Tibial artery (tissue), 4 donors: ENCODE measurements at regions of chr1 and their contacts with region 1.

Region 1: GRCh38 chr1:45359882-45360513 is 19.8 kb upstream of the MUTYH start:
- DNase-seq: peak; percentile 78 to 80
- H3K4me3 ChIP-seq: peak overlapping the region in 1 of 2 donors; percentile 19
- H3K27ac ChIP-seq: peak overlapping the region; percentile 74 to 81
- H3K4me1 ChIP-seq: peaks cover 0 to 16% (median 10%) of the 10 kb centered on the region in 4 donors
- H3K27me3 ChIP-seq: no peaks in the 10 kb centered on the region
- CTCF ChIP-seq: peak; percentile 68 to 72

Region 2: DNA sequence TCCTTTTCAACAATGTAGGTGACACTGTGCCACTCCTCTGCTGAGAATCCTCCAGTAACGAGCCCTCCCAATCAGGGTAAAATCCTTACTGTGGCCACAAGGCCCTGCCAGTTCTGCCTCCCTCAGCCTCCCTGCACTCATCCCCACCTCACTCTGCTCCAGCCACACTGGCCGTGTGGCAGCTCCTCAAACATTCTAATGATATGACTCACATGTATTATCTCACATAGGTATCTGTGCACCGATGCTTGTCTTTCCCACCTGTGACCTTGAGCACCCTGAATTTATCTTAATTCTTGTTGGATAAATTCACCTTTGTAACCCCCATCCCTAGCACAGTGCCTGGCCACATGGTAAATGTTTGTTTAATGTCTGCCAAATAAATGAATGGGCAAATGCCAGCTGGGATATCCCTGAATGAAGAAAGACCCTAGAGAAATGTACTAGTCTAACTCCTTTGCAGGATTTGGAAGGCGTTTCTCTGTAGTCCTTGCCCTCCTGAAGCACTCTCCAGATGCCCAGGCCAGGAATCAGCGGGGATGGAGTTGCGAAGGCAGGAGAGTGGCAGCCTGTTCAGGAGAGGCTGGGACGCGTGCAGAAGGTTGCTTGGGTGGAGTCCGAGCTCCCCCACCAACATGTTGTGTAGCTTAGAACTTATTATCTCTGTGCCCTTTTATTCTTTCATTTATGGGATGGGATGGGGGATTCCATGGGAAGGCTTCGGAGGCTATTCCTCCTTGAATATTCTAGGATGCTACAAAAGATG is 791.7 kb before region 1 on chr1:
- intact Hi-C with region 1: no loop called
- DNase-seq: no peak
- H3K4me3 ChIP-seq: no peak overlapping the region
- H3K27ac ChIP-seq: no peak overlapping the region
- H3K4me1 ChIP-seq: no peaks in the 10 kb centered on the region
- H3K27me3 ChIP-seq: peaks cover 0 to 66% of the 10 kb centered on the region in 2 donors
- CTCF ChIP-seq: no peak

Region 3: DNA sequence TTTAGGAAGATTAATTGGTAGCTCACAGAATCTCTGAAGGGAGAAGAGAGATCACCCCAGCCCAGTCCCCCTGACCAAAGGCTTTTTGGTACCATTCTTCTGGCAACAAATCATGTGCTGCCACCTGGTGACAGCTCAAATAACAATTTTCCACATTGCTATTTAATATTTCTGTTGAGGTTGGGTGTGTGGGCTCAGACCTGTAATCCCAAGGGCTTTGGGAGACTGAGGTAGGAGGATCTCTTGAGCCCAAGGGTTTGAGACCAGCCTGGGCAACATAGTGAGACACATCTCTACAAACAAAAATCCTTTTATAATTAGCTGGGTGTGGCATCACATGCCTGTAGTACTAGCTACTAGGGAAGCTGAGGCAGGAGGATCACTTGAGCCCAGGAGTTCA is 133.2 kb after region 1 on chr1:
- intact Hi-C with region 1: loop called (anchors 2 kb)
- DNase-seq: peak in 1 of 2 donors; percentile 51
- H3K4me3 ChIP-seq: no peak overlapping the region
- H3K27ac ChIP-seq: no peak overlapping the region
- H3K4me1 ChIP-seq: peaks cover 0 to 16% (median 7%) of the 10 kb centered on the region in 4 donors
- H3K27me3 ChIP-seq: no peaks in the 10 kb centered on the region
- CTCF ChIP-seq: peak; percentile 57 to 66